Activated naive CD4-positive, alpha-beta T cell treated with anti-CD3 and anti-CD28 coated beads for 36 hours (primary cell): ENCODE measurements at regions of chr12 and their contacts with region 1.

Region 1: DNA sequence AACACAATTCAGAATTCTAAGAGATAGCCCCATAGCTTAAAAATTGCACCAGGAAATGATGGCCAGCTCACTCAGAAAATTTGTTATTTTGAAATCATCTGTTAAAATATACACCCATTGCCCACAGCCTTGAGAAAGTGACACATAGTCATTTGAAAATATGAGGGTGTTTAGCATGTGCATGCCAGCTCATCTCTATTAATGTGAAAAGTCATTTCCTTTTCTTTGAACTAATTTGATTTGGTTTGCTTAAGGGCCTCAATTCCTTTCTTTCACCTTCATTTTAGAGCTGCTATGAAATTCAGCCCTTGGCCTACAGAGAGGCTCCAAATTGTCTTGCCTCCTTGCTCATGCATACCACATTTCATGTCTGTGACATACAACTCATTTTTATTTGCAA is 241.4 kb downstream of the PHLDA1 start:
- DNase-seq: no peak
- H3K4me3 Mint-ChIP-seq: no peak overlapping the region
- H3K27ac Mint-ChIP-seq: no peak overlapping the region
- H3K4me1 Mint-ChIP-seq: peaks cover 22% of the 10 kb centered on the region
- H3K27me3 Mint-ChIP-seq: peaks cover 10% of the 10 kb centered on the region

Region 2: GRCh38 chr12:75641031-75641780 is 149.0 kb before region 1 on chr12:
- CTCF ChIA-PET with region 1: no interaction called
- intact Hi-C with region 1: loop called (anchors 5 kb)
- DNase-seq: peak; percentile 26
- H3K4me3 Mint-ChIP-seq: no peak overlapping the region
- H3K27ac Mint-ChIP-seq: no peak overlapping the region
- H3K4me1 Mint-ChIP-seq: peaks cover 21% of the 10 kb centered on the region
- H3K27me3 Mint-ChIP-seq: peaks cover 12% of the 10 kb centered on the region

Region 3: DNA sequence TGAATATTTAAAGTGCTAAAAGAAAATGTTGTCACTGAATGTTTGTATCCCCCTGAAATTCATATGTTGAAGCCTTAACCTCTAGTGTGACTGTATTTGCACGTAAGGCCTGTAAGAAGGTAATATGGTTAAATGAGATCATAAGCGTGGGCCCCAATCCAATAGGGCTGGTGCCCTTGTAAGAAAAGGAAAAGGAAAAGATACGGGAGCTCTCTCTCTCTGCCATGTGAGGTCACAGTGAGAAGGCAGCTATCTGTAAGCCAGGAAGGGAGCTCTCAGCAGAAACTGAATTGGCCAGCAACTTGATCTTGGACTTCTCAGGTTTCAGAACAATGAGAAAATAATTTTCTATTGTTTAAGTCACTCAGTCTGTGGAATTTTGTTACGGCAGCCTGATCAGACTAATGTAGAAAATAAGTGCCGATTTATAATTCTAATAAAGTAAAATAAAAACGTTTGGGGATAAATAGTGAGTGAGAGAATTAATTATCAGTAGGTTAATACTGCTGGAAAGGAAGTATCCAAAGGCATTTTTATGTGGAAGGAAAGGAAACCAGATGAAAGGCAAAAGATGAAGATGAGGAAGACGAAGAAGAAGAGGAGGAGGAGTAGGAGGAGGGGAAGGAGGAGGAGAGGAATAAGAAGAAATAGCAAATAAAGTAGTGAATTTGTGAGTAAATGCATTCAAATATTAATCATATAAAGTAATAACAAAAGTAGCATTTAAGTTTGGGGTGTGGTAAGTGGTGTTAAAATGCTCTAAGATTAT is 90.3 kb before region 1 on chr12:
- CTCF ChIA-PET with region 1: no interaction called
- intact Hi-C with region 1: loop called (anchors 5 kb)
- DNase-seq: no peak
- H3K4me3 Mint-ChIP-seq: no peak overlapping the region
- H3K27ac Mint-ChIP-seq: no peak overlapping the region
- H3K4me1 Mint-ChIP-seq: peaks cover 7% of the 10 kb centered on the region
- H3K27me3 Mint-ChIP-seq: no peaks in the 10 kb centered on the region